Heart right ventricle (tissue), 16 donors: ENCODE measurements at regions of chr11 and their contacts with region 1.

Region 1: GRCh38 chr11:77497368-77497767 is 23.5 kb upstream of the PAK1 start:
- DNase-seq: no peak
- ATAC-seq: peak in 5 of 8 donors; percentile 17 to 68 (median 53)
- H3K4me3 ChIP-seq: no peak overlapping the region
- H3K27ac ChIP-seq: no peak overlapping the region
- H3K4me1 ChIP-seq: peaks cover 0 to 14% (median 0%) of the 10 kb centered on the region in 9 donors
- H3K27me3 ChIP-seq: peaks cover 0 to 7% (median 0%) of the 10 kb centered on the region in 7 donors
- CTCF ChIP-seq: no peak

Region 2: DNA sequence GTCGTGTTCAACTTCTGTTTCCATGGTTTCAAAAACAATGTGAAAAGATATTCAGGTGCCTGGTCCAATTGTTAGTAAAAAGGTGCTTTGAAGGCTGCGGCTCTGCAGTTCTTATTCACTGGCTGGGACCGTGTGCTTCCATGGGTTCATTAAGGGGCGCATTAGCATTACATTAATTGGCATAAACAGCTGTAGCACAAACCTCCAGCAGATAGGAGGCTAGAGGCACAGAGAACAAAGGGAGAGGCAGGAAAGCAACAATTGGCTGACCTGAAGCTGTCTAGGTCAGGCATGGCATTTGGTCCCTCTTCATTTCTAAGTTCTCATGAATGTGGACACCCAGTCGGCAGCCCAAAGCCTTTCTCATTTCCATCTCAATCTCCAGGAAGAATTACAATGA is 40.0 kb before region 1 on chr11:
- intact Hi-C with region 1: loop called in 1 of 10 experiments (anchors 2 kb)
- DNase-seq: no peak
- ATAC-seq: no peak
- H3K4me3 ChIP-seq: no peak overlapping the region
- H3K27ac ChIP-seq: peak overlapping the region in 1 of 10 donors; percentile 12
- H3K4me1 ChIP-seq: peaks cover 0 to 15% (median 0%) of the 10 kb centered on the region in 9 donors
- H3K27me3 ChIP-seq: no peaks in the 10 kb centered on the region
- CTCF ChIP-seq: no peak